ENCODE measurements at regions of chr3 and their contacts with region 1.

Region 1: DNA sequence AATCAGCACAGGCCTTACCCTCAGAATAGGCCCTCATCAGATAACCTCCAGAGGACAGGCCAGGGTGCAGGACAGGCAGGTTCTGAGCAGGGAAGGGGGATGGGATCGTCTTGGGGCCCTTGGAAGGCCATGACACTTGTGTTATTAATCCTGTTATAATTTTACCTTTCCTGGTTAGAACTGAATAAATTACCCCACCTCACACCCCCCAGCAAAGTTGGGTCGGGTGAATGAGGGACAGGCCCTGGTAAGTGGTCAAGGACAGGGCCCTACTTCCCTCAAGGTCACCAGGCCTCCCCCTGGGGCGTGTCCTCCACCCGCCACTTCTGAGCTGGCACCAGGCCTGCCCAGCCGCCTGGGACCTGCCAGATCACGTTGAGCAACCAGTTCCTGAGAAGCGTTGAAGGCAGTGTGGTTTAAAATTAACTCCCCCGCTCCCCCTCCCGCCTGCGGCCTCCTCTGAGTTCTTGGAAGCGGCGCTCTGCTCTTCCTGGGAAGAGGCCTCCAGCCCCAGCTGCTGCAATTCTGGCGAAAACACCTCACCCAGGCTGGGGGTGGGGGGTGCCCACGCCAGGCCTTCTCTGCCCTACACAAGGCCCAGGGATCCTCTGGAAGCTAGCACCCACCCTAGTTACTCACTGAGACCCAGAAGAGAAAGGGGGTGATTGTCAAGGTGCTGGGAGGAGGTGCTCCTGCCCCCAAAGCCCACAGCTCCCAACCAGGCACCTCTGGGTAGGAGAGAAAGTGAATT is 10.6 kb downstream of the CISH start:
- DNase-seq: peak; percentile 95 to 98 (median 97)
- ATAC-seq: peak; percentile 78 to 87 (median 82)
- H3K4me3 ChIP-seq: peak overlapping the region in 8 of 12 donors; percentile 6 to 30 (median 25)
- H3K27ac ChIP-seq: peak overlapping the region; percentile 93 to 100 (median 98)
- H3K4me1 ChIP-seq: peaks cover 15 to 75% (median 65%) of the 10 kb centered on the region in 12 donors
- H3K27me3 ChIP-seq: no peaks in the 10 kb centered on the region
- CTCF ChIP-seq: no peak
- POLR2A ChIP-seq: peak in 1 of 2 donors; percentile 28

Region 2: GRCh38 chr3:50554553-50554952 is 46.5 kb before region 1 on chr3:
- intact Hi-C with region 1: no loop called
- DNase-seq: no peak
- ATAC-seq: no peak
- H3K4me3 ChIP-seq: no peak overlapping the region
- H3K27ac ChIP-seq: no peak overlapping the region
- H3K4me1 ChIP-seq: peaks cover 0 to 20% (median under 1%) of the 10 kb centered on the region in 12 donors
- H3K27me3 ChIP-seq: no peaks in the 10 kb centered on the region
- CTCF ChIP-seq: no peak
- POLR2A ChIP-seq: no peak

Region 3: DNA sequence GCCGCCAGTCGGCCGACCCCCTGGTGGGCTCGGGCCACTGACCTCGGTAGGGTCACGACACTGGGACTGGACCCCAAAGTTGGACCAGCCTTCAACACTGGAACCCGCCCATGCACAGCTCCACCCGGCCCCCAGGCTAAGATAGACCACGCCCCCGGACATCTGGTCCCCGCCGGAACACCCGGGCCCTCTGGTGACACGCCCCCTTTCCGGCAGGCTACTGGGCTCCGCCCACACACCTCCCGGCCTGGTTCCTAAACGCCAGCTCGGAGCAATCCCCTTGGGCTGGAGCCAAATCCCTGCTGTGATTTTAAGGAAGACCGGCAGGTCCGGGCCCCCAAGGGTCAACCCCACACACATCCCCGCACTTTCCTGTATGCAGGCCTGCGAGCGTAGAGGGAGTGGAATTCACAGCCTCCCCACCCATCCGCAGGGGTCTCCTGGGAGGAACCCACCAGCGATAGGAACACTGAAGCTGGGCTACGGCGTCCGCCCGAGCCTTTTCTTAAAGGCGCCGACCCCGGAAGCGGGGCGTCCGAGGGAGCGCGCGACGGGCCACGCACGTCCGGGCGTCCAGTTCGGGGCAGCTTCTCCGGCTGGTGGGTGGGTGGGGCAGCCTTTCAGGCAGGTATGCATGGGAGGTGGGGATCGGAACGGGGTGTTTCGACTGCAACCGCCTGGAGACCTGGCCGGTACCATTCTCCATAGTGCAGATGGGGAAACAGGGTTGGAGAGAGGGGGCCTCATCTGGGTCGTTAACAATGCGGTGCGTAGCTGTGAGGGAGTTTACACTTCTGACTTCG is 31.9 kb before region 1 on chr3 and contains the start of gene HEMK1:
- intact Hi-C with region 1: loop called in 1 of 10 experiments (anchors 1 kb)
- DNase-seq: peak; percentile 98 to 99 (median 99)
- ATAC-seq: peak; percentile 87 to 92 (median 89)
- H3K4me3 ChIP-seq: peak within 1 kb of the TSS; percentile 57 to 95 (median 81)
- H3K27ac ChIP-seq: peak within 1 kb of the TSS; percentile 70 to 98 (median 95)
- H3K4me1 ChIP-seq: peaks cover 0 to 66% (median 34%) of the 10 kb centered on the region in 12 donors
- H3K27me3 ChIP-seq: no peaks in the 10 kb centered on the region
- CTCF ChIP-seq: no peak
- POLR2A ChIP-seq: peak in 1 of 2 donors; percentile 34
- total RNA-seq, gene HEMK1: 7.8 to 19.7 (median 13.8) TPM

Region 4: DNA sequence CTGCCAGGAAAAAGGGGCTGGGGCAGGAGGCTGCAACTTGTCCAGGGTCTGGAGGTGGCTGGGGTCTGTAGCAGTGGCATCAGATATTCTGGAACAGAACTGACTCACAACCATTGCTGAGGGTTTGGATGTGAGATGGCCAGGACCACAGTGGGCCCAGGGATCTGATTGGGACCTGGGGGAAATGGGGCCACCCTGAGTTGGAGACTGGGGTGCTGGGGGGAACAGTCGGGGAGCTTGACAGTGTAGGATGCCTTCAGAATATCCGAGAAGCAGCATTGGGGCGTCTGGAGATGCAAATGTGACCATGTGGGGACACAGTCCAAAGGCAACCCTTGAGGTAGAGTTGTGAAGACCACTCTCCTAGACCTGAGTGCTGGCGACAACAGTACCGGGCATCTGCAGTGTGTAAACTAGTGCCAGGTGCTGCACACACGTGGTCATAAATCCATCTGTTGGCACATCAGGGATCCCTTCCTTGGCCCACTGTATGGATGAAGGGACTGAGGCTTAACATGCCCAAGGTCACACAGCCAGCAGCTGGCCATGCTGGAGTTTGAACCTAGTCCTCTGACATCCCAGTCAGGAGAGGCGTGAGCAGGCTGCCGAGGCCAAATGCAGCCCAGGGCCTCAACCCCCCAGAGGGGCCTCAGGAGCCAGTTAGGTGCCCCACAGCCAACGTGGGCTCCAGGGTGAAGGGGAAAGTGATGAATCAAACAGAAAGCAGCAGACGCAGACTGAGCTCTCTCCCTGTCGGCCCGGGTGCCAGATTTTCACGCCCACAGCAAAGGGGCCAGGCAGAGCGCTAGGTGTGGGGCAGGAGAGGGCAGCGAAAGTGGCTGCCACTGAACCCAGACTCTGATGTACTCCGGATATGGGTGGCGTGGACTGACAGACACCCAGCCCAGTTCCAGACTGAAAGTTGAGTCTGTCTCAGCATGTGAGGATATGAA is 12.9 kb before region 1 on chr3:
- intact Hi-C with region 1: loop called in 2 of 10 experiments (anchors 1 to 2 kb)
- DNase-seq: no peak
- ATAC-seq: no peak
- H3K4me3 ChIP-seq: no peak overlapping the region
- H3K27ac ChIP-seq: peak overlapping the region in 10 of 12 donors; percentile 27 to 96 (median 78)
- H3K4me1 ChIP-seq: peaks cover 5 to 82% (median 54%) of the 10 kb centered on the region in 12 donors
- H3K27me3 ChIP-seq: no peaks in the 10 kb centered on the region
- CTCF ChIP-seq: no peak
- POLR2A ChIP-seq: no peak

Region 5: GRCh38 chr3:51304230-51304629 is 703.2 kb after region 1 on chr3:
- intact Hi-C with region 1: no loop called
- DNase-seq: no peak
- ATAC-seq: no peak
- H3K4me3 ChIP-seq: no peak overlapping the region
- H3K27ac ChIP-seq: no peak overlapping the region
- H3K4me1 ChIP-seq: no peaks in the 10 kb centered on the region
- H3K27me3 ChIP-seq: no peaks in the 10 kb centered on the region
- CTCF ChIP-seq: no peak
- POLR2A ChIP-seq: no peak

Region 6: GRCh38 chr3:51379301-51379700 is 778.3 kb after region 1 on chr3:
- intact Hi-C with region 1: no loop called
- DNase-seq: no peak
- ATAC-seq: no peak
- H3K4me3 ChIP-seq: no peak overlapping the region
- H3K27ac ChIP-seq: no peak overlapping the region
- H3K4me1 ChIP-seq: peaks cover 0 to 11% (median 9%) of the 10 kb centered on the region in 12 donors
- H3K27me3 ChIP-seq: no peaks in the 10 kb centered on the region
- CTCF ChIP-seq: no peak
- POLR2A ChIP-seq: no peak

Measured in heart left ventricle (tissue), 16 donors.